ENCODE measurements at regions of chr7 and their contacts with region 1.

Region 1: DNA sequence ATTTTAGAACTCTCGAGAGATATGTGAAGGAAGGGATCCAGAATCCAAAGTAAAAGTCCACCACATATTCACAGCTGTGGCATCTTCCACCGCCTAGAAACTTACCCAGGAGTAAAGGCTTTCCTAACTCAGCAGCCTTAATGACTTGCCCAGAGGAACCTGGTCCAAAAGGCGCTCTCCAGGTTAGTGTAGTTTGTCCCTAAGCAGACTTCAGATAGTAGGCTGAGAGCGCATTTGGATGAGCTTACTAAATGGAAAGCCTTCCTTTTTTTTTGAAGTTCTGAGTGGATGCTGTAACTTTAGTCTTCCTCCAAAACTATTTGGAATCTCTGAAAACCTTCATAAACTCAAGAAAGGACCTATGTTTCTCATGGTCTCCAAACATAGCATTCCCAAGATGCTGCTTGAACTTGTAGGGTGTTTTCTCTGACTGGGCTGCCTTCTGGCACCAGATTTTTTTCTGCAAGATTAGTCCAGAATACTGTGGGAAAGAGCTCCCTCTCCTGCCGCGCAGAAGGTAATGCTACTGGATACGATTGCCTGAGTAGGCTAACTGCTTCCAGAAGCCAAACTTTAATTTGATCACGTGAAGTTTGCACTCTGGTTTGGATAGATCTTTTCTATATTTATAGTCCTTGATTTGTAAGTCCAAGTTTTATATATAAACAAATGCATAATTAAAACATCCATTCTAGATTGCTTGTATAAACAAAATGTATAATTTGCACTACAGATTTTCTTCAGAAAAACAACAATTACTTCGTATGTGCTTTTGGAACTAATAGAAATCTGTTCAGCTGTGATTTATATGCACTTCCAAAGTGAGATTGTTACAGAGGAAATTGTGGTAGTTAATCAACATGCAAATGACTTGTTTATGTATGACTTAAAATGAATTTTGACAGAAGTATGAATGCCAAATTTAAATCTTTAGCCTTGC is 19.6 kb upstream of the GPR37 start:
- DNase-seq: peak; percentile 49
- CTCF ChIP-seq: peak; percentile 74

Region 2: GRCh38 chr7:123904151-123904550 is 881.0 kb before region 1 on chr7:
- CTCF ChIA-PET with region 1: no interaction called
- POLR2A ChIA-PET with region 1: no interaction called
- DNase-seq: no peak
- CTCF ChIP-seq: no peak

Region 3: GRCh38 chr7:124152859-124153692 is 632.1 kb before region 1 on chr7:
- CTCF ChIA-PET with region 1: interaction called, 14 read pairs
- POLR2A ChIA-PET with region 1: no interaction called
- DNase-seq: no peak
- CTCF ChIP-seq: peak; percentile 26

Region 4: DNA sequence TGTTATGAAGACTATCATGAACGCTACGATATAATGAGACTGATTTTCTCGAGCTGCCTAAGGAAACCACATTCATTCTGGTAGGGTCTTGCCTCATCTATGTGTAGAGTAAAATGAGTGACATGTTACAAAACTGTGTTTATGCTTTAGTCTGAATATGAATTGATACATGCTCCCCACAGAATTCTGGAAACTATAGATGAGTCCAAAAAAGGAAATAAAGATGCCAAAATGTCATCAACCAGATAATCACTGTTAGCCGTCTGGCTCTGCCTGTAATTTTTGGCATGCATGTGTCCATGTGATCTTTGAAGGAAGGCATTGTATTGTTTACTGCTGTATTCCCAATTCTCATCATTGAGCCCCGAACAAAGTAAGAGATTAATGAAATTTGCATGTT is 23.1 kb after region 1 on chr7:
- CTCF ChIA-PET with region 1: no interaction called
- POLR2A ChIA-PET with region 1: no interaction called
- DNase-seq: no peak
- CTCF ChIP-seq: no peak

Region 5: GRCh38 chr7:125010540-125010939 is 225.4 kb after region 1 on chr7:
- CTCF ChIA-PET with region 1: no interaction called
- POLR2A ChIA-PET with region 1: no interaction called
- DNase-seq: no peak
- CTCF ChIP-seq: no peak

Region 6: DNA sequence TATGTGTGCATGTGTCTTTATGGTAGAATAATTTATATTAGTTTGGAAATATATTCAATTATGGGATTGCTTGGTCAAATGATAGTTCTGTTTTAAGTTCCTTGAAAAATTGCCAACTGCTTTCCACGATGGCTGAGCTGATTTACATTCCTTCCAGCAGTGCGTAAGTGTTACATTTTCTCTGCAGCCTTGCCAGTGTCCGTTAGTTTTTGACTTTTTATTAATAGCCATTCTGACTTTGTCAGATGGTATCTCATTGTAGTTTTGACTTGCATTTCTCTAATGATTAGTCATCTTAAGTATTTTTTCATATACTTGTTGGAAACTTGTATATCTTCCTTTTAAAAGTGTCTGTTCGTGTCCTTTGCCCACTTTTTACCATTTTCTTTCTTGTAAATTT is 578.7 kb after region 1 on chr7:
- CTCF ChIA-PET with region 1: no interaction called
- POLR2A ChIA-PET with region 1: no interaction called
- DNase-seq: no peak
- CTCF ChIP-seq: no peak